Prostate gland (tissue), 2 donors: ENCODE measurements at regions of chr1 and their contacts with region 1.

Region 1: GRCh38 chr1:59511476-59512465 is 214.9 kb downstream of the FGGY start:
- DNase-seq: no peak
- H3K4me3 ChIP-seq: no peak overlapping the region
- H3K27ac ChIP-seq: no peak overlapping the region
- H3K4me1 ChIP-seq: no peaks in the 10 kb centered on the region
- H3K27me3 ChIP-seq: no peaks in the 10 kb centered on the region
- CTCF ChIP-seq: no peak
- POLR2A ChIP-seq: no peak

Region 2: DNA sequence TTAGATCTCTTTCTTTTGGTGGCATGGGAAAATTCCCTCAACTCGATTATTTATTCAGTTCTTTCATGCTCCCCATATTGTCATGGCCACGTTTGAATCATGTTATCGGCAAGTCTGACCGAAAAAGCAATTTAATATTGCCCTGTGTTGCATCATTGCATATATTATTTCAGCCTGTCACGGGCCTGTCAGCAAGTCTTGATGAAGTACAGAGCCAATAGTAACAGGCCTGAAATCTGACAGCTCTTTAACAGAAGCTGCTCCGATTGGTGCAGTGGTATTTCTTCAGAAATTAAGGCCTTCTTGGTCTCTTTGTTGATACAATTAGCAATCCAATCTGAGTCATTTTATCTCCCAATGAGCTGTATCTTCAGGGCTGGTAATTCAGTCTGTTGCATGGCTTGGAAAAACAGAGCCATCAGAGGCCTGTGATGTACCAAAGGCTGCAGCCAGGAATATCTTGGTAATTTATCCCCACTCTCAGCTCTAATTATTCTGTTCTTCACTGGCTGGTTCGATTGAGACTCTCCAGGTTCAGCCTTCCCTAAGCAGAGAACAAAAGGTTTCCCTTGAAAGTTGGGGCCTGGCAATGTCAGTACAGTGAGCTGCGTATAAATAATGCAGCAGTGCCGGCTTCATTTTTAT is 65.4 kb before region 1 on chr1:
- intact Hi-C with region 1: loop called (anchors 10 kb)
- DNase-seq: no peak
- H3K4me3 ChIP-seq: no peak overlapping the region
- H3K27ac ChIP-seq: peak overlapping the region in 1 of 2 donors; percentile 1
- H3K4me1 ChIP-seq: no peaks in the 10 kb centered on the region
- H3K27me3 ChIP-seq: no peaks in the 10 kb centered on the region
- CTCF ChIP-seq: no peak
- POLR2A ChIP-seq: no peak